ENCODE measurements at regions of chr10 and their contacts with region 1.

Region 1: DNA sequence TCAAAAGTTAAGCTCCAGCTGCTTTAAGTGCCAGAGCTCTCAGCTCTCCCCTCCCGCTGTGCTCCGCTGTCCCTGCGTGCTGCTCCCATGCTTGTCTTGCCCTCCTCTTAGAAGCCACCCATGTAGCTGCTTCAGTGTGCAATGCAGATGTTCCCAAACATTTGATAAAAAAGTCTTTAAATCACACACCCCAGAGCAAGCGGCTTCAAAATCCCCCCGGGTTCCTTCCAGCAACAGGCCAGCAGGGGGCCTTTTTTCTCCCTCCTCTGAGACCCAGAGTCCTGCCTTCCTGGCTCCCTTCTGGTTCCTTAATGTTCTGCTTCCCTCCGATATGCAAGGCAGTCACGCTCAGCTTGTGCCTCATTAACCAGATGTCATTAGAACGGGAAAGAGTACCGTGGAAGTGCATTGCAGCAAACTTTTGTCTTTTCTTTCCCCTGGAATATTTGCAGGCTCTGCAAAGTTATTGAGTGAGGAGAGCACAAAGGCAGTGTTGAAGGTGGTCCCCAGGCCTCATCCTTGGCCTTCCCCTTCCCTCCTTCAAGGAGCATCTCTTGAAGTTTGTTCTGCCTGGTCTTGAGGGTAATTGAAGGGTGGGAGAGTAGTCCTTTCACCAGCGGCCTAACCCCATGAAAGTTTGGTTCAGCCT is 25.5 kb downstream of the LDB3 start:
- DNase-seq: peak; percentile 71 to 92 (median 79)
- H3K4me3 ChIP-seq: no peak overlapping the region
- H3K27ac ChIP-seq: no peak overlapping the region
- H3K4me1 ChIP-seq: peaks cover 0 to 5% (median 0%) of the 10 kb centered on the region in 3 donors
- H3K27me3 ChIP-seq: no peaks in the 10 kb centered on the region
- CTCF ChIP-seq: peak; percentile 46

Region 2: DNA sequence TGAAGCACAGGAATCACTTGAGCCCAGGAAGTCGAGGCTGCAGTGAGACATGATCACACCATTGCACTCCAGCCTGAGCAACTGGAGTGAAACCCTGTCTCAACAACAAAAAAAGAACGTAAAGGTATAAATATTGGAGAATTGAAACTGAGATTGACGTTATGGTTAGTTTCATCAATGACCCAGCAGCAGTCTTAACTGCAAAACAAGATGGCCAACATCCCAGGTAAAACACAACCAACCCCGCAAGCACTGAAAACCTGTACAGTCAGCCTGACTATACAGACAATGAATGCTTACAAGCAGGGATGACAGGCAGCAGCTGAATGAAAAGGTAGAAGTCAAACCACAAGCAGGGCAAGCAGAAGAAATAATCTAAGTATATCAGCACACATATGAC is 207.0 kb before region 1 on chr10:
- intact Hi-C with region 1: no loop called
- DNase-seq: no peak
- H3K4me3 ChIP-seq: no peak overlapping the region
- H3K27ac ChIP-seq: no peak overlapping the region
- H3K4me1 ChIP-seq: no peaks in the 10 kb centered on the region
- H3K27me3 ChIP-seq: no peaks in the 10 kb centered on the region
- CTCF ChIP-seq: no peak

Region 3: GRCh38 chr10:86569335-86569734 is 124.5 kb before region 1 on chr10:
- intact Hi-C with region 1: no loop called
- DNase-seq: no peak
- H3K4me3 ChIP-seq: no peak overlapping the region
- H3K27ac ChIP-seq: no peak overlapping the region
- H3K4me1 ChIP-seq: no peaks in the 10 kb centered on the region
- H3K27me3 ChIP-seq: no peaks in the 10 kb centered on the region
- CTCF ChIP-seq: no peak

Region 4: GRCh38 chr10:86899670-86900276 is 205.9 kb after region 1 on chr10:
- intact Hi-C with region 1: loop called (anchors 5 kb)
- DNase-seq: peak in 4 of 5 donors; percentile 67 to 89 (median 76)
- H3K4me3 ChIP-seq: no peak overlapping the region
- H3K27ac ChIP-seq: no peak overlapping the region
- H3K4me1 ChIP-seq: no peaks in the 10 kb centered on the region
- H3K27me3 ChIP-seq: no peaks in the 10 kb centered on the region
- CTCF ChIP-seq: peak; percentile 69